Left ventricle myocardium inferior (tissue), 1 donor: ENCODE measurements at regions of chr12 and their contacts with region 1.

Region 1: GRCh38 chr12:45183246-45183645 is 32.6 kb upstream of the ANO6 start:
- DNase-seq: no peak
- H3K4me3 ChIP-seq: no peak overlapping the region
- H3K27ac ChIP-seq: no peak overlapping the region
- H3K4me1 ChIP-seq: no peaks in the 10 kb centered on the region
- H3K27me3 ChIP-seq: no peaks in the 10 kb centered on the region
- CTCF ChIP-seq: peak; percentile 59

Region 2: GRCh38 chr12:44674875-44675274 is 508.4 kb before region 1 on chr12:
- intact Hi-C with region 1: no loop called
- DNase-seq: no peak
- H3K4me3 ChIP-seq: no peak overlapping the region
- H3K27ac ChIP-seq: no peak overlapping the region
- H3K4me1 ChIP-seq: no peaks in the 10 kb centered on the region
- H3K27me3 ChIP-seq: no peaks in the 10 kb centered on the region
- CTCF ChIP-seq: no peak

Region 3: GRCh38 chr12:45388545-45388944 is 205.3 kb after region 1 on chr12:
- intact Hi-C with region 1: loop called (anchors 10 kb)
- DNase-seq: no peak
- H3K4me3 ChIP-seq: no peak overlapping the region
- H3K27ac ChIP-seq: no peak overlapping the region
- H3K4me1 ChIP-seq: no peaks in the 10 kb centered on the region
- H3K27me3 ChIP-seq: no peaks in the 10 kb centered on the region
- CTCF ChIP-seq: peak; percentile 73